CD4-positive, alpha-beta memory T cell (primary cell): ENCODE measurements at regions of chr11 and their contacts with region 1.

Region 1: DNA sequence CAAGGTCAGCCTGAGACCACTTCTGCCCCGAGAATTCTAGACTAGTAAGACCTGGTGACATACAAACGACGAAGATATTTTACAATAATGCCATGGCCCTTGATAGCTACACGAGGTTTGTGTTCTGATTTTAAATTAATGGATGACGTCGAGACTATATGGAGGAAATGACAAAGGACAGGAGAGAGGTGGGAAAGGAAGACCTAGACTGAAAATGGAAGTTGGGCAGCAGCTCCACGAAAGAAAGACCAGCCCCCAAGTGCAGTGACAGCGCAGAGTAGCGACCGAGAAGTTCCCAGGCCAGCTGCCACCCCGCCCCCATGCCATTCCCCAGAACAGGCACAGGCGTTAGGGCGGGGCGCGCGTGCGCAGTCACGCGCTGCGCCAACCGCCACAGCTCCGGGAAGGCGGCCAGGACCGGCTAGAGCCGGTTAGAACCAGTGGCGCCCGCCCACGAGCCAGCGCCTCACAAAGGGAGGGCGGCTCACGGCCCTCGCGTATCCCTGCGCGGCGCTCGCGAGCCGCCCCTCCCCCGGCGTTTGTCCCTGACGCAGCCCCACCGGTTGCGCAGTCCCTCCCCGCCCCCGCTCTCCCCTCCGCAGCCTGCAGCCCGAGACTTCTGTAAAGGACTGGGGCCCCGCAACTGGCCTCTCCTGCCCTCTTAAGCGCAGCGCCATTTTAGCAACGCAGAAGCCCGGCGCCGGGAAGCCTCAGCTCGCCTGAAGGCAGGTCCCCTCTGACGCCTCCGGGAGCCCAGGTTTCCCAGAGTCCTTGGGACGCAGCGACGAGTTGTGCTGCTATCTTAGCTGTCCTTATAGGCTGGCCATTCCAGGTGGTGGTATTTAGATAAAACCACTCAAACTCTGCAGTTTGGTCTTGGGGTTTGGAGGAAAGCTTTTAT is 1.5 kb upstream of the MALAT1 start:
- DNase-seq: peak; percentile 97 to 98 (median 97)
- H3K4me3 ChIP-seq: peak overlapping the region; percentile 96 to 99
- H3K4me3 Mint-ChIP-seq: peak overlapping the region in 1 of 8 donors; percentile 85
- H3K27ac ChIP-seq: peak overlapping the region; percentile 97
- H3K27ac Mint-ChIP-seq: no peak overlapping the region
- H3K4me1 ChIP-seq: peaks cover 16% of the 10 kb centered on the region
- H3K4me1 Mint-ChIP-seq: peaks cover 7 to 41% (median 20%) of the 10 kb centered on the region in 4 donors
- H3K27me3 ChIP-seq: no peaks in the 10 kb centered on the region
- H3K27me3 Mint-ChIP-seq: peaks cover 0 to 3% of the 10 kb centered on the region in 2 donors

Region 2: DNA sequence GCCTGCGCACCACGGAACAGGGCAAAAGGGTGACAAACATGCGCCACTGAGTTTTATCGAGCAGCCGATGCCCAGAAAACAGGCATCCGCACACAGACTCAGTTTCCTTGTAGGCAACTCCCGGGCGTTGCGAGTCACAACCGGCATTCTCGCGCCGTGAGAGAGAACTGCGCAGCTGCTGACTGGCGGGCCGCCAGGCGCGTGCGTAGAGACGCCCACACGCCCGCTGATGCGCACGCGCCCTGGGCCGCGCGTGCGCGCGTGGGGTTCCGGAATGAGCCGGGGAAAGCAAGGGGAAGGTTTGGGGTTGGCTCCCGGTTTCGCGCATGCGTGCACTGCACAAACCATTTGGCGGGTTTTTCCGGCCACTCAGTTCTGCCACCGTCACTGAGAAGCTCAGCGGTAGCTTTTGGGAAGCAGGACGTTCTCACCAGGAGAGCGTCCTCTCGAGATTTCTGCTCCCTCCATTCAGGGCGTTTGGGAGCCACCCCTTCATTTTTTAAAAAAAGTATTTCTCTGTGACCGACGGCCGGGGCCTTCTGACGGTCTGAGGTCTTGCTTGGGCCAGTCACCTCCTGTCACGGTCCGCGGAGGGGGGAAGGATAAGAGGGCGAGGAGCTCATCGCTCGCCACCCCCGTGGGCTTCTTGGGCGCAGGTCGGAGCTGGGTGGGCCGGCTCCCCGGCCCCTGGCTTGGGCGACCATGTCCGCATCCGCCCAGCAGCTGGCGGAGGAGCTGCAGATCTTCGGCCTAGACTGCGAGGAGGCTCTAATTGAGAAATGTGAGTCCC is 235.6 kb before region 1 on chr11 and contains the start of gene POLA2:
- CTCF ChIA-PET with region 1: no interaction called
- POLR2A ChIA-PET with region 1: interaction called, 19 read pairs
- intact Hi-C with region 1: no loop called
- DNase-seq: peak; percentile 95 to 98 (median 98)
- H3K4me3 ChIP-seq: peak within 1 kb of the TSS; percentile 67 to 99
- H3K4me3 Mint-ChIP-seq: peak within 1 kb of the TSS; percentile 92 to 97 (median 93)
- H3K27ac ChIP-seq: peak within 1 kb of the TSS; percentile 92
- H3K27ac Mint-ChIP-seq: peak within 1 kb of the TSS; percentile 94 to 97 (median 96)
- H3K4me1 ChIP-seq: peaks cover 23% of the 10 kb centered on the region
- H3K4me1 Mint-ChIP-seq: peaks cover 28 to 67% (median 36%) of the 10 kb centered on the region in 4 donors
- H3K27me3 ChIP-seq: no peaks in the 10 kb centered on the region
- H3K27me3 Mint-ChIP-seq: no peaks in the 10 kb centered on the region
- total RNA-seq, gene POLA2: 26.4 to 27.3 TPM

Region 3: DNA sequence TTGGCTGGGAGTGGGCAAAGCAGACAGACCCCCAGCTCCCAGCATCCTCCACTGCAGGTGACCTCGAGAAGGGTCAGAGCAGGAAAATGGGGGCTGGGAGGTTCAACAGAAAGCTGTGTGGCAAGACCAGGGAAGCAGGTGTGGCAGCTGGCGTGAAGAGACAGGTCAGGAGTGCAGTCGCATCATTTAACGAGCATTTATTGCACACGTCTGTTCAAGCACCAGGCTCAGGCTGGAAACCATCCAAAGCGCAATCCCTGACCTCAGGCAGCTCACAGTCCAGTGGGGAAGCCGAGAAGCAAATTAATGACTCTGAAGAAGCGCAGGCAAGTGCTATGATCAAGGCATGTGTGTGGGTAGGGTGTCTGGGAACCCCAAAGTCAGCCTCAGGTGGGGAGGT is 122.4 kb before region 1 on chr11:
- CTCF ChIA-PET with region 1: no interaction called
- POLR2A ChIA-PET with region 1: interaction called, 654 read pairs
- intact Hi-C with region 1: no loop called
- DNase-seq: no peak
- H3K4me3 ChIP-seq: no peak overlapping the region
- H3K4me3 Mint-ChIP-seq: no peak overlapping the region
- H3K27ac ChIP-seq: no peak overlapping the region
- H3K27ac Mint-ChIP-seq: no peak overlapping the region
- H3K4me1 ChIP-seq: no peaks in the 10 kb centered on the region
- H3K4me1 Mint-ChIP-seq: peaks cover 0 to 1% (median under 1%) of the 10 kb centered on the region in 4 donors
- H3K27me3 ChIP-seq: no peaks in the 10 kb centered on the region
- H3K27me3 Mint-ChIP-seq: no peaks in the 10 kb centered on the region

Region 4: GRCh38 chr11:65432686-65433582 is 64.5 kb before region 1 on chr11:
- CTCF ChIA-PET with region 1: interaction called, 4 read pairs
- POLR2A ChIA-PET with region 1: interaction called, 3,839 read pairs
- intact Hi-C with region 1: no loop called
- DNase-seq: peak in 4 of 5 donors; percentile 55 to 68 (median 60)
- H3K4me3 ChIP-seq: no peak overlapping the region
- H3K4me3 Mint-ChIP-seq: peak overlapping the region in 5 of 8 donors; percentile 27 to 61 (median 40)
- H3K27ac ChIP-seq: peak overlapping the region; percentile 2
- H3K27ac Mint-ChIP-seq: peak overlapping the region; percentile 77 to 94 (median 89)
- H3K4me1 ChIP-seq: peaks cover 77% of the 10 kb centered on the region
- H3K4me1 Mint-ChIP-seq: peaks cover 65 to 92% (median 76%) of the 10 kb centered on the region in 4 donors
- H3K27me3 ChIP-seq: no peaks in the 10 kb centered on the region
- H3K27me3 Mint-ChIP-seq: no peaks in the 10 kb centered on the region

Region 5: GRCh38 chr11:65477149-65477965 is 20.0 kb before region 1 on chr11:
- CTCF ChIA-PET with region 1: interaction called, 86 read pairs
- POLR2A ChIA-PET with region 1: interaction called, 1,536 read pairs
- intact Hi-C with region 1: loop called (anchors 1 kb)
- DNase-seq: peak; percentile 78 to 90 (median 82)
- H3K4me3 ChIP-seq: peak overlapping the region; percentile 90 to 93
- H3K4me3 Mint-ChIP-seq: peak overlapping the region; percentile 95 to 100 (median 100)
- H3K27ac ChIP-seq: peak overlapping the region; percentile 93
- H3K27ac Mint-ChIP-seq: peak overlapping the region; percentile 97 to 100 (median 99)
- H3K4me1 ChIP-seq: peaks cover 20% of the 10 kb centered on the region
- H3K4me1 Mint-ChIP-seq: peaks cover 10 to 26% (median 17%) of the 10 kb centered on the region in 4 donors
- H3K27me3 ChIP-seq: no peaks in the 10 kb centered on the region
- H3K27me3 Mint-ChIP-seq: no peaks in the 10 kb centered on the region

Region 6: GRCh38 chr11:65569973-65570918 is 72.9 kb after region 1 on chr11 and contains the start of gene ZNRD2:
- CTCF ChIA-PET with region 1: no interaction called
- POLR2A ChIA-PET with region 1: interaction called, 76 read pairs
- intact Hi-C with region 1: no loop called
- DNase-seq: peak; percentile 98 to 99 (median 99)
- H3K4me3 ChIP-seq: peak within 1 kb of the TSS; percentile 71 to 94
- H3K4me3 Mint-ChIP-seq: peak within 1 kb of the TSS; percentile 97 to 100 (median 98)
- H3K27ac ChIP-seq: peak within 1 kb of the TSS; percentile 99
- H3K27ac Mint-ChIP-seq: peak within 1 kb of the TSS; percentile 99 to 100 (median 99)
- H3K4me1 ChIP-seq: peaks cover 75% of the 10 kb centered on the region
- H3K4me1 Mint-ChIP-seq: peaks cover 44 to 92% (median 65%) of the 10 kb centered on the region in 4 donors
- H3K27me3 ChIP-seq: no peaks in the 10 kb centered on the region
- H3K27me3 Mint-ChIP-seq: peaks cover 0 to 3% of the 10 kb centered on the region in 2 donors
- total RNA-seq, gene ZNRD2: 24.6 to 27.5 TPM

Region 7: GRCh38 chr11:65888163-65888814 is 390.9 kb after region 1 on chr11 and contains the start of gene FIBP:
- CTCF ChIA-PET with region 1: no interaction called
- POLR2A ChIA-PET with region 1: interaction called, 20 read pairs
- intact Hi-C with region 1: no loop called
- DNase-seq: peak; percentile 90 to 97 (median 91)
- H3K4me3 ChIP-seq: peak within 1 kb of the TSS; percentile 79 to 83
- H3K4me3 Mint-ChIP-seq: peak within 1 kb of the TSS; percentile 86 to 97 (median 91)
- H3K27ac ChIP-seq: peak within 1 kb of the TSS; percentile 86
- H3K27ac Mint-ChIP-seq: peak within 1 kb of the TSS; percentile 95 to 100 (median 99)
- H3K4me1 ChIP-seq: peaks cover 63% of the 10 kb centered on the region
- H3K4me1 Mint-ChIP-seq: peaks cover 34 to 73% (median 56%) of the 10 kb centered on the region in 4 donors
- H3K27me3 ChIP-seq: no peaks in the 10 kb centered on the region
- H3K27me3 Mint-ChIP-seq: no peaks in the 10 kb centered on the region
- total RNA-seq, gene FIBP: 39.9 to 42.1 TPM

Region 8: DNA sequence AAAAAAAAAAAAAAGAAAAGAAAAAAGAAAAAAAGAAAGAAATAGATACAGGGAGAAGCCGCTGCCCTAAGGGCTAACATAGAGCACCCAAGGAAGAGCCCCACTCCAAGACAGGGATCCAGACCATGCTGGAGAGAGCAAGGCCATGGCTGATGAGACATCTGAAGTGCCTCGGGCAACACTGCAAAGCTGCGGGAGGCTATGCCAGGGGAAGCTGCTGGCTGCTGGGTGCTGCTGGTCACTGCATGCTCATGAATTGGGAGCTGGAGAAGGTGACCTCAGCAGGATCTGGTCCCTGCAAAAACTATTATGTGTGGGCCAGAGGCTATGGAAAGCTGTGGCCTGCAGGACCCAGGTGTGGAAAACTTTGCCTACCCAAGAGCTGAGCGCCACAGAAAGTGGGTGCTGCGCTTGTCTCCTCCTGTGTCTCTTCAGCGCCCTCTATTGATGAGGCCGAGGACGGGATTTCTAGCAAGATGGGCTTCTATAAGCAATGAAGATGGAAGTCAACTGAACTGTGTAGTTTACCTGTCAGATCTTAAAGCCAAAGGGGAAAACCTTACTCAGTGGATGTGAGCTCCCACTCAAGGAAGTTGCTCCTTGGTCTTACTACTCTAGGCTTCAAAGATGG is 891.5 kb after region 1 on chr11:
- CTCF ChIA-PET with region 1: no interaction called
- POLR2A ChIA-PET with region 1: no interaction called
- intact Hi-C with region 1: no loop called
- DNase-seq: peak; percentile 66 to 80 (median 68)
- H3K4me3 ChIP-seq: no peak overlapping the region
- H3K4me3 Mint-ChIP-seq: no peak overlapping the region
- H3K27ac ChIP-seq: no peak overlapping the region
- H3K27ac Mint-ChIP-seq: no peak overlapping the region
- H3K4me1 ChIP-seq: peaks cover 7% of the 10 kb centered on the region
- H3K4me1 Mint-ChIP-seq: peaks cover 6 to 9% (median 7%) of the 10 kb centered on the region in 4 donors
- H3K27me3 ChIP-seq: no peaks in the 10 kb centered on the region
- H3K27me3 Mint-ChIP-seq: peaks cover 5 to 6% of the 10 kb centered on the region in 2 donors